Calu3 (cell line): ENCODE measurements at regions of chr1 and their contacts with region 1.

Region 1: DNA sequence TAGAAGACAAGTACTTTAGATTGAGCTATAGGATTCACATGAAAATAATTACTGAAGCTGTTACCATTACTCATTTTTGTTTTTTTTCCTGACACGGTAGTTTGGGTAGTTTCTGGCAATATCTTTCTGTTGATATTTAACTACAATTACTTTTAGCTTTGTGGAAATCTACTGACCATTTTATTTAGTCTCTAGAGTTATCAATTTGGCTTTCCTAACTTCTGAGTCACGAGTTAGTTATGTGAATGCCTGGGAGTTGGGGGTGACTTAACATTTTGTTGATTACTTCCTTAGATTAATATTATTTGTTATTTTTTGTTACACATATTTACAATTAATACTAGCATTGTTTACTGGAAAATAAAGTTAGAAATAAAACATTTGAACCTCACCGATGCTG is 160.6 kb downstream of the HMCN1 start:
- DNase-seq: no peak
- H3K4me3 Mint-ChIP-seq: no peak overlapping the region
- H3K27ac Mint-ChIP-seq: no peak overlapping the region
- H3K4me1 Mint-ChIP-seq: no peaks in the 10 kb centered on the region
- H3K27me3 Mint-ChIP-seq: no peaks in the 10 kb centered on the region
- CTCF ChIP-seq: no peak

Region 2: DNA sequence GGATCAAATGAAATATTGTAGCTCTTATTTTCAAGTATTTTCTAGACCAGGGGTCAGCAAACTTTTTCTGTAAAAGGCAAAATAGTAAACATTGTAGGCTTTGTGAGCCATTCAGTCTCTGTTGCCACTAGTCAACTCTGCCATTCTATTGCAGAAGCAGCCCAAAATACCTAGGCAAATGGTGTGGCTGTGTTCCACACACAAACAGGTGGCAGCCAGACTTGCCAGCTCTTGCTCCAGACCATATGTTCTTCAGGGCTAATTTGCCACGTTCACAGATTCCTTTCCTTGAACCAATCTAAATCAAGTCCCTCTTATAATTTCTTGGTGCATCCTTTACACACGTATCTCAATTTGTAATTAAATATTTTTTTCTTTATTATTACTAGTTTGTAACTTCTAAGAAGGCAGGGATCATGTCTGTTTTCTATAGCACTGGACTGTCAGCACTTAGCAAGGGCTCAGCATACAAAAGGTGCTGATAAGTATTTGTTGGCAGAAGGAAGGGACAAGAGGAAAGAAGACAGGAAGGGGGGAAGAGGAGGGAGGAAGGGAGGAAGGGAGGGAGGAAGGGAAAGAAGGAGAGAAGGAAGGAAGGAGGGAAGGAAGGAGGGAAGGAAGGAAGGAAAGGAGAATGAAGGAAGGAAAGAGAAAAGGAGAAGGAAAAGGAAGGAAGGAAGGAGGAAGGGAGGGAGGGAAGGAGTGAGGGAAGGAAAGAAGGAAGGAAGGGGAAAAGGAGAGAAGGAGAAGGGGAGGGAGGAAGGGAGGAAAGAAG is 1033.6 kb before region 1 on chr1:
- CTCF ChIA-PET with region 1: no interaction called
- intact Hi-C with region 1: loop called (anchors 5 kb)
- DNase-seq: no peak
- H3K4me3 Mint-ChIP-seq: no peak overlapping the region
- H3K27ac Mint-ChIP-seq: no peak overlapping the region
- H3K4me1 Mint-ChIP-seq: peaks cover 9% of the 10 kb centered on the region
- H3K27me3 Mint-ChIP-seq: no peaks in the 10 kb centered on the region
- CTCF ChIP-seq: no peak